CD8-positive, alpha-beta memory T cell (primary cell): ENCODE measurements at regions of chr2 and their contacts with region 1.

Region 1: GRCh38 chr2:101717071-101717845 is 19.8 kb downstream of the MAP4K4 start:
- DNase-seq: peak in 4 of 5 donors; percentile 42 to 63 (median 50)
- H3K4me3 ChIP-seq: peak overlapping the region; percentile 11
- H3K4me3 Mint-ChIP-seq: peak overlapping the region; percentile 25 to 84 (median 74)
- H3K27ac ChIP-seq: no peak overlapping the region
- H3K27ac Mint-ChIP-seq: peak overlapping the region; percentile 77 to 94 (median 90)
- H3K4me1 ChIP-seq: peaks cover 93% of the 10 kb centered on the region
- H3K4me1 Mint-ChIP-seq: peaks cover 66 to 82% (median 80%) of the 10 kb centered on the region in 3 donors
- H3K27me3 ChIP-seq: no peaks in the 10 kb centered on the region
- H3K27me3 Mint-ChIP-seq: no peaks in the 10 kb centered on the region

Region 2: GRCh38 chr2:101697124-101698013 is 19.9 kb before region 1 on chr2 and contains the start of gene MAP4K4:
- CTCF ChIA-PET with region 1: interaction called, 12 read pairs
- POLR2A ChIA-PET with region 1: interaction called, 10 read pairs
- DNase-seq: peak; percentile 62 to 81 (median 64)
- H3K4me3 ChIP-seq: peak within 1 kb of the TSS; percentile 78
- H3K4me3 Mint-ChIP-seq: peak within 1 kb of the TSS; percentile 86 to 94 (median 92)
- H3K27ac ChIP-seq: peak within 1 kb of the TSS; percentile 64
- H3K27ac Mint-ChIP-seq: peak within 1 kb of the TSS; percentile 78 to 94 (median 88)
- H3K4me1 ChIP-seq: peaks cover 18% of the 10 kb centered on the region
- H3K4me1 Mint-ChIP-seq: peaks cover 14 to 17% (median 17%) of the 10 kb centered on the region in 3 donors
- H3K27me3 ChIP-seq: no peaks in the 10 kb centered on the region
- H3K27me3 Mint-ChIP-seq: no peaks in the 10 kb centered on the region
- total RNA-seq, gene MAP4K4: 30.8 to 36.0 TPM